PC-9 (cell line): ENCODE measurements at regions of chr5 and their contacts with region 1.

Region 1: DNA sequence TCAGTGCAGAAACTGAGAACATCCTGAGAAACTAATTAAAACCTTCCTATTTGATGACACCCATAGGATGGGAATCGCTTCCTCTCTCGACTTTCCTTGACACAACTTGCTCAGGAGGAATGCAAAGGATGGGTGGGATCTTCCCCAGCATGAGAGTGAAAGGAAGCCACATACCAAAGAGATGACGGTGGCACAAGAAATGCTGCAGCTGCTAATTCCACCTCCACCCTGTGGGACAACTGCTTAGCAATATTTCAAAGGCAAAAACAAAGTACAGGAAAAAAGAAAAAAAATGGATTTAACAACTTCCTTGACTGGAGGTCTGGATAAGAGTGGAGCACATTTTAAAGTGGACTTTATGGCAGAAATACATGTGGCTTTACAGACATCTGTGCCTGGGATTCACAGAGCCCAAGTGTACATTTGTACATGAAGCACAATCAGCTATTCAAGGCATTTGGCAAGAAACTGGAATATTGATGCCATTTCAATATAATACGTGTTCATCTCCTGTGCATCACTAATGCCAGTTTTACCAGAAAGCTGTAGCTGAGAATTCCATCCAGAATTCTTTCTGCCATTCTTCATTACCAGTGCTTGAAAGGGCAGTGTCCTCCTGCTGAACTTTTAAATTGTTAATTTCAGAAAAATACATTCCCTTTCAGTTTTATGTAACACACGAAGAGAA is 359.2 kb upstream of the ACTBL2 start:
- DNase-seq: peak; percentile 79 to 98
- H3K4me3 ChIP-seq: peak overlapping the region; percentile 24; the same call in 1 of the 2 replicates
- H3K27ac ChIP-seq: peak overlapping the region; percentile 98
- H3K4me1 ChIP-seq: peaks cover 66% of the 10 kb centered on the region
- H3K27me3 ChIP-seq: no peaks in the 10 kb centered on the region
- CTCF ChIP-seq: 0 out of 2 replicates have a peak, but pooled peaks have one; percentile 16

Region 2: GRCh38 chr5:57736716-57737115 is 105.1 kb before region 1 on chr5:
- CTCF ChIA-PET with region 1: no interaction called
- POLR2A ChIA-PET with region 1: interaction called, 8 read pairs
- intact Hi-C with region 1: loop called (anchors 5 kb)
- DNase-seq: no peak
- H3K4me3 ChIP-seq: no peak overlapping the region
- H3K27ac ChIP-seq: peak overlapping the region; percentile 92
- H3K4me1 ChIP-seq: peaks cover 49% of the 10 kb centered on the region
- H3K27me3 ChIP-seq: no peaks in the 10 kb centered on the region
- CTCF ChIP-seq: no peak

Region 3: GRCh38 chr5:57816108-57816507 is 25.7 kb before region 1 on chr5:
- CTCF ChIA-PET with region 1: no interaction called
- POLR2A ChIA-PET with region 1: interaction called, 8 read pairs
- intact Hi-C with region 1: loop called (anchors 2 kb)
- DNase-seq: peak; percentile 51 to 81
- H3K4me3 ChIP-seq: no peak overlapping the region
- H3K27ac ChIP-seq: peak overlapping the region; percentile 73
- H3K4me1 ChIP-seq: peaks cover 22% of the 10 kb centered on the region
- H3K27me3 ChIP-seq: no peaks in the 10 kb centered on the region
- CTCF ChIP-seq: no peak

Region 4: DNA sequence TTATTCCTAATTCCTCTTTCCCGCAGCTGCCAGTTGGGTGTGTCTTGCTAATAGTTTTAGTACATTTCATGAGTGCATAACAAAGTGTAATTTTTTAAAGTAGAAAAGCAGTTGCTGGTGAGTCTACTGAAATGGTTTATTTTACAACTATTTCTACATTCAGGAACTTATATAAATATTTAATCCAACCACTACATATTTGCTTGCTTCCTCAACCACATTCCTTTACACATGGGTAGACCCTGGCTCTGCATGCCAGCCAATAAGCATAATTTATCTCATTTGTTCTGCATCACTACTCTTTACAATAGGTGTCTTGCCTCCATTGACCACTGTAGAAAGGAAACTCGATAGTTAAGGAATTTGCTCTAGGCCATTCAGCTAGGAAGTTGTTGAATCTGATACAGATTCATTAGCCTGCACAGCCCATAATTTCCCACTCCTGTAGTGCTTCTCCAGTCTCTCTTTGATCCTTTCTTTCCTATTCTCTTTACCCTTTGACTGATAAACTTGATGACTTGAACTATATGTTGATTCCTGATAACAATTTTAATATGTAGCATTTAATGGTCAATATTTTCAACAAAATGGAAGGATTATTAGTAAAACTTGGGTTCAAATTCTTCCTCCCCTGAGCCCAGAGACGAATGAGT is 16.7 kb before region 1 on chr5:
- CTCF ChIA-PET with region 1: no interaction called
- POLR2A ChIA-PET with region 1: no interaction called
- intact Hi-C with region 1: loop called (anchors 1 kb)
- DNase-seq: peak; percentile 63 to 99
- H3K4me3 ChIP-seq: no peak overlapping the region
- H3K27ac ChIP-seq: peak overlapping the region; percentile 97
- H3K4me1 ChIP-seq: peaks cover 39% of the 10 kb centered on the region
- H3K27me3 ChIP-seq: no peaks in the 10 kb centered on the region
- CTCF ChIP-seq: no peak

Region 5: GRCh38 chr5:57862457-57862911 is 20.7 kb after region 1 on chr5:
- CTCF ChIA-PET with region 1: no interaction called
- POLR2A ChIA-PET with region 1: interaction called, 6 read pairs
- intact Hi-C with region 1: loop called (anchors 1 kb)
- DNase-seq: peak; percentile 69 to 97
- H3K4me3 ChIP-seq: no peak overlapping the region
- H3K27ac ChIP-seq: peak overlapping the region; percentile 99
- H3K4me1 ChIP-seq: peaks cover 31% of the 10 kb centered on the region
- H3K27me3 ChIP-seq: no peaks in the 10 kb centered on the region
- CTCF ChIP-seq: no peak

Region 6: DNA sequence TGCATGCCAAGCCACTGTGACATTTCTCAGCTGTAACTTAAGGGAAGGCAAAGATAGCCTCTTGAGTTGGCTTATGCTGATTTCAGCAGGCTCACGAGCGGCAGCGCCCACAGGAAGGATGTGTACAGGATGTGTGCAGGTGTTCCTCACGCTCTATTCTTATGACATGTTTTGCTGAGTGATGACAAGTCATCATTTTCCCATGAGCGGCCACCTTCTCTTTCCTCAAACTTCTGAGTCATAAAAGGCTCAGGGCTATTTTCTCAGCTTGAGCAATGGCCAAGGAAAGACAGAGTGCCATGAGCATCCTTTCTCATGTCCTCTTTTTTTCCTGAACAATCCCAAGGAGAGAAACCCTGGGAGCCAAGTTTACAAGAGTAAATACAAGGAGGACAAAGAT is 252.2 kb after region 1 on chr5:
- CTCF ChIA-PET with region 1: no interaction called
- POLR2A ChIA-PET with region 1: no interaction called
- intact Hi-C with region 1: loop called (anchors 5 kb)
- DNase-seq: peak; percentile 72 to 96
- H3K4me3 ChIP-seq: no peak overlapping the region
- H3K27ac ChIP-seq: peak overlapping the region; percentile 92
- H3K4me1 ChIP-seq: peaks cover 25% of the 10 kb centered on the region
- H3K27me3 ChIP-seq: no peaks in the 10 kb centered on the region
- CTCF ChIP-seq: no peak

Region 7: DNA sequence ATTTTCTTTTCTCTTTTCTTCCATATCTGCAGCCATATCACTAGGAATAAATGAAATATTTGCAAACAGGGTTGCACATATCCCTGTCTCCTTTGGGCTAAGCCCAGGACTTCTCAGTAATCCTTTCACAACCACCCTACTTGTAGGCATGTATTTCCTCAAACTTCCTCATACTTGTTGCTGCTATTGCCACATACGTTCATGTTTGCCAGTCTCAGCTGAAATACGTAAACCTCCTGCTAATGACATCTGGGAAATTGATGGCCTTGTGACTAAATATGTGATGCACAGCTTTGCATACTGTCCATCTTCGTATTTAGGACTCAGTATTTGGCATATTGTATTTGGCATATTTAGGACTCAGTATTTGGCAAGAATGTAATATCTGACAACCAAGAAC is 393.5 kb after region 1 on chr5:
- CTCF ChIA-PET with region 1: no interaction called
- POLR2A ChIA-PET with region 1: interaction called, 6 read pairs
- intact Hi-C with region 1: loop called (anchors 1 kb)
- DNase-seq: peak; percentile 27 to 90
- H3K4me3 ChIP-seq: no peak overlapping the region
- H3K27ac ChIP-seq: peak overlapping the region; percentile 52
- H3K4me1 ChIP-seq: peaks cover 43% of the 10 kb centered on the region
- H3K27me3 ChIP-seq: no peaks in the 10 kb centered on the region
- CTCF ChIP-seq: no peak